ENCODE measurements at regions of chr19 and their contacts with region 1.

Region 1: DNA sequence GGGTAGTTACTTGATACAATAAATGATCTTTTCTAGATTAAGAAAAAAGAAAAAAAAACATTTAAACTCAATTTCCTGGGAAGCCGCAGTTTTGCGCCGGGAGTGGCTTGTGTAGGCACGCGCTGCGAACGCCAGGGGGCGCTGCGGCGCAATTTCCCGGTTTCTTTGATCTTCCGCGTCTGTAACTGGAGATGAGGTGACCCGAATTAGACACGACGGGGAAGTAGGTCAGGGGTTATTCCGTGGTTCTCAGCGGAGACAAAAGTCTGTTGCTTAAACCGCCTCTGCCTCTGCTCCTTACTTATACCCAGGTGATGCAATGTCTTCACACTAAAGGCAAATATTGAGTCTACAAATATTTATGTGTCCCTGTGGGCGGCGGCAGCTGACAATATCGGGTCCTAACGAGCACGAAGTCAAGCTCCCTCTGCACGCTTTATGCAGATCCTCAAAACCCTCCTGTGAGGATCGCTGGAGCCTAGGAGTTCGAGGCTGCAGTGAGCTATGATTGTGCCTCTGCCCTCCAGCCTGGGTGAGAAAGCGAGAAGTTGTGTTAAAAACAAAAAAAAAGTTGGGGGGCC is 15.2 kb downstream of the STXBP2 start:
- DNase-seq: no peak
- H3K4me3 ChIP-seq: peak overlapping the region; percentile 26
- CTCF ChIP-seq: peak; percentile 90

Region 2: GRCh38 chr19:7629347-7630054 is 22.6 kb before region 1 on chr19 and contains the starts of genes PET100 and XAB2:
- CTCF ChIA-PET with region 1: interaction called, 18 read pairs
- POLR2A ChIA-PET with region 1: no interaction called
- DNase-seq: peak; percentile 94
- H3K4me3 ChIP-seq: peak within 1 kb of the TSS; percentile 99
- CTCF ChIP-seq: no peak

Region 3: DNA sequence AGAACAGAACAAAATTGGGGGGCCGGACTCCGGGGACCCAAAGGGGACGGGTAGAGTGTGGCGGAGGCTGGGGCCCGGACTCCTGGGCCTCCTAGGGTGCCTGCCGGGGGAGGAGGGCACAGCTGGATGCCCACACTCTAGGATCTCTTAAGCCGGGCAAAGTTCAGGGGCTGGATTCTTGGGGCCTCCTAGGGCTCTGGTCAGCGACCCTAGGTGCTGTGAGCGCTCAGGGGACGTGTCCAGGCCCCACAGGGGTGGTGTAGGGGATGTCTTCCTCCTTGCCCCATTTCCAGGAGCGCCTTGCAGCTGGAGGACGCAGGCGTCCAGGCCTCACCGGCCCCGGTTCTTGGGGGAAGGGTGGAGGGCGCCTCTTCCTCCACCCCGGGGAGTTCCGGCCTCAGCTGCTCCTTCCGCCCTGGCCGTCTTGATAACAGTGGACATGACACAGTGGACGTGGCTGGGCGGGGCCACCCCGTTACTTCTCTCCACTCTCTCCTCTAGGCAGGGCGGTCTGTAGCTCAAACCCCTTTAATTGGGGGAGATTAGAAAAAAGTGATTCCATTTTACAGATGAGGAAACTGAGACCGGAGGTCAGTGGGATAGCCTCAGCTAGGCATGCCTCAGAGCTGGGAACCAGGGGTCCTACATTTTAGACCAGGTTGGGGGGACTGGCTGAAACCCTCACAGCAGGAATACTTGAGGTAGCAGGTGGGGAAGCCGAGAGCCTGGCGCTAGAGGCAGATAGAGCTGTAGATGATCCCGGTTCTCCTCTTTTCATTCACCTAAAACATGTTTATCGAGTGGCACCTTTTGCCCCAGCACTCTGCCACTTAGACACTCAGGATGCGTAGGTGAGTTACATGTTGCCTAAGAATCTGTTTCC is 14.5 kb before region 1 on chr19:
- CTCF ChIA-PET with region 1: interaction called, 18 read pairs
- POLR2A ChIA-PET with region 1: no interaction called
- DNase-seq: no peak
- H3K4me3 ChIP-seq: peak overlapping the region; percentile 15; the same call in 1 of the 2 replicates
- CTCF ChIP-seq: no peak

Region 4: DNA sequence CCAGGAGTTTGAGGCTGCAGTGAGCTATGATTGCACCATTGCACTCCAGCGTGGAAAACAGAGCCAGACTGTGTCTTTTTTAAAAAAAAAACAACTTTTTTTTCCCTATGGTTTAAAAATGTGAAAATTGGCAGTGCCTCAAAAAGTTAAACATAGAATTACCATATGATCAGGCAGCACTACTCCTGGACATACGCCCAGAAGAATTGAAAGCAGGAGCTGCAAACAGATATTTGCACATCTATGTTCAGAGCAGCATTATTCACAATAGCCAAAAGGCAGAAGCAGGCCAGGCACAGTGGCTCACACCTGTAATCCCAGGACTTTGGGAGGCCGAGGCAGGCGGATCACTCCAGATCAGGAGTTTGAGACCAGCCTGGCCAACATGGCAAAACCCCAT is 12.9 kb after region 1 on chr19:
- CTCF ChIA-PET with region 1: interaction called, 33 read pairs
- POLR2A ChIA-PET with region 1: no interaction called
- DNase-seq: peak; percentile 37
- H3K4me3 ChIP-seq: no peak overlapping the region
- CTCF ChIP-seq: no peak

Region 5: DNA sequence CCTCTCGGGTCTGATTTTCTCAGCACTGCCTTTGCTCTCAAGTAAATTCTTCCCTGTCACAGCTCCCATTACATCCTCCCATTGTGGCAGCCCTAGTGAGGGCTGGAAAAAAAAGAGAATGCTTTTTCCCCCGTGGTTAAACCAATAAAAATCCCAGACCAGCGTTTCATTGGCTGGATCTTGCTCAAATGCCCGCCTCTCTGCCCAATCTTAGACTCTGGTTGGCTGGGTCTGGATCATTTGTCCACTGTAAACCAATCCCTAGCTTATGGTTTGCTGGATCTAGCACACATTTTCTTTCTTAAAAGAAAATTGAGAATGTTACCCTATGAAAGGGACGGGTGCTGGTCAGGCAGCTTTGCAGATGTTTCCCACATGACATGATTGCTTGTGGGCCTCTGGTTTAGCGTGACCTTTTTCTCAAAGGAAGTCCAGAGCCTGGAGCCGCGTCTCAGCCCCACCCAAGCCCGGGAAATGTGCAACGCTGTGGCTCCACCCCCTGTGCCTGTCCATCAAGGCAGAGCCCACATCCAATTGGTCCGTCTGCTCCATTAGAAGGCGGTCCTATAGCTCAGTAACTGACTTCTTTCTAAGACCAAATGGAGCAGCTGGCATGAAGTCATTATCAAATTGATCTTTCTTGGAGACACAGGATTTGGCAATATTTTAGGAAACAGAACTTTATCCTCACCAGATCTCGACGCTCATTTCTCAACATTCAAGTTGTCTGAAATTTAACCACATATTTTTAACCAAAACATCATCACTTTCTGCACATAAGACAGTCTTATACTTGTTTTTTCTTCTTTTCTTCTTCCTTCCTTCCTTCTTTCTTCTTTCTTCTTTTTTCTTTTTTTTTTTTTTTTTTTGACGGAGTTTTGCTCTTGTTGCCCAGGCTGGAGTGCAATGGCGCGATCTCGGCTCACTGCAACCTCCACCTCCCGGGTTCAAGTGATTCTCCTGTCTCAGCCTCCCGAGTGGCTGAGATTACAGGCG is 22.2 kb after region 1 on chr19:
- CTCF ChIA-PET with region 1: interaction called, 33 read pairs
- POLR2A ChIA-PET with region 1: no interaction called
- DNase-seq: no peak
- H3K4me3 ChIP-seq: no peak overlapping the region
- CTCF ChIP-seq: no peak

Region 6: GRCh38 chr19:8396563-8397203 is 744.5 kb after region 1 on chr19:
- CTCF ChIA-PET with region 1: no interaction called
- POLR2A ChIA-PET with region 1: no interaction called
- DNase-seq: no peak
- H3K4me3 ChIP-seq: no peak overlapping the region
- CTCF ChIP-seq: peak; percentile 86

Measured in AG04449 (cell line).